Mammary epithelial cell (primary cell): ENCODE measurements at regions of chr18 and their contacts with region 1.

Region 1: DNA sequence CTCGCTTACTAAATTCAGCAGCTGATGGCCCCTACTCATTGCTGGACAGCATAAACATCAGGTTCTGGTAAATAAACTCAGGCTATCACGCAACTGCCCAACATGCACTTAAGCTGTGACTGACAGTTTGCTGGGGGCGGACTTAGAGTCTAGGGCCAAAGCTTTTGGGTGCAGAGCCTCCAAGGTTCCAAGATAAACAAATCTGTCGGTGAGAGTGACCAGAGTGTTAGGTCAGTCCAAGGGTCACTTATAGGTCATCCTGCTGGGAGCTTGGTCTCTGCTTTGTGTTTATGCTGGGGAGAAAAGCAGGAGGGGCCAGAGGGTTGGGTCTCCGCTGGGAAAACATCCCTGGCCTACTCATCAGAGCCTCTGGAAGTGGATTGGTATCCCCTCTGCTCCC is 188.6 kb upstream of the GATA6 start:
- DNase-seq: no peak
- H3K4me3 ChIP-seq: no peak overlapping the region
- H3K27ac ChIP-seq: no peak overlapping the region
- H3K4me1 ChIP-seq: no peaks in the 10 kb centered on the region
- H3K27me3 ChIP-seq: no peaks in the 10 kb centered on the region
- CTCF ChIP-seq: no peak

Region 2: DNA sequence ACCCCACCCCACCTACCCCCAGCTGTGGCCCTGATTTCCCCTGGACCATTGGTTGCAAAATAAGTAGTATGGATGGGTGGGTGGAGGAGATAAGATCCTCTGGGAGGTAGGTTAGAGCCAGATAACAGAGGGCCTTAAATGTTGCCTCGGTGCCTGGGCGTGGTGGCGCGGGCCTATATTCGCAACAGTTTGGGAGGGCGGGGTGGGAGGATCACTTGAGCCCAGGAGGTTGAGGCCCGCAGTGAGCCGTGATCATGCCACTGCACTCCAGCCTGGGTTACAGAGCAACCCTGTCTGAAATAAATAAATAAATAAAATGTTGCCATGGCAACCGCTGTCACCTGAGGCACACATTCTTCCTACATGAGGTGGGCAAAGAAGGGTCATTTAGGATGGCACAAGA is 85.3 kb after region 1 on chr18:
- CTCF ChIA-PET with region 1: no interaction called
- dilution Hi-C with region 1: loop called (anchors 5 kb)
- in situ Hi-C with region 1: no loop called
- intact Hi-C with region 1: no loop called
- DNase-seq: no peak
- H3K4me3 ChIP-seq: no peak overlapping the region
- H3K27ac ChIP-seq: no peak overlapping the region
- H3K4me1 ChIP-seq: no peaks in the 10 kb centered on the region
- H3K27me3 ChIP-seq: no peaks in the 10 kb centered on the region
- CTCF ChIP-seq: no peak